Activated B cell treated with CpG ODN at 0.5 μM for 24 hours (primary cell): ENCODE measurements at regions of chr4 and their contacts with region 1.

Region 1: GRCh38 chr4:2468445-2469192 is at the start of gene RNF4:
- DNase-seq: peak; percentile 83
- ATAC-seq: peak; percentile 87
- H3K4me3 Mint-ChIP-seq: peak within 1 kb of the TSS; percentile 96
- H3K27ac Mint-ChIP-seq: peak within 1 kb of the TSS; percentile 94
- H3K4me1 Mint-ChIP-seq: peaks cover 51% of the 10 kb centered on the region
- H3K27me3 Mint-ChIP-seq: no peaks in the 10 kb centered on the region
- CTCF ChIP-seq: no peak
- total RNA-seq, gene RNF4: 93.5 and 93.6 TPM in 2 replicates

Region 2: GRCh38 chr4:2393353-2394270 is 75.0 kb before region 1 on chr4:
- CTCF ChIA-PET with region 1: no interaction called
- POLR2A ChIA-PET with region 1: no interaction called
- intact Hi-C with region 1: no loop called
- DNase-seq: no peak
- ATAC-seq: peak; percentile 72
- H3K4me3 Mint-ChIP-seq: peak overlapping the region; percentile 81
- H3K27ac Mint-ChIP-seq: peak overlapping the region; percentile 73
- H3K4me1 Mint-ChIP-seq: peaks cover 32% of the 10 kb centered on the region
- H3K27me3 Mint-ChIP-seq: peaks cover 11% of the 10 kb centered on the region
- CTCF ChIP-seq: no peak

Region 3: GRCh38 chr4:2412885-2413716 is 55.5 kb before region 1 on chr4:
- CTCF ChIA-PET with region 1: no interaction called
- POLR2A ChIA-PET with region 1: interaction called, 12 read pairs
- intact Hi-C with region 1: loop called (anchors 1 kb)
- DNase-seq: peak; percentile 55
- ATAC-seq: peak; percentile 70
- H3K4me3 Mint-ChIP-seq: peak overlapping the region; percentile 81
- H3K27ac Mint-ChIP-seq: peak overlapping the region; percentile 73
- H3K4me1 Mint-ChIP-seq: peaks cover 38% of the 10 kb centered on the region
- H3K27me3 Mint-ChIP-seq: peaks cover 13% of the 10 kb centered on the region
- CTCF ChIP-seq: no peak

Region 4: DNA sequence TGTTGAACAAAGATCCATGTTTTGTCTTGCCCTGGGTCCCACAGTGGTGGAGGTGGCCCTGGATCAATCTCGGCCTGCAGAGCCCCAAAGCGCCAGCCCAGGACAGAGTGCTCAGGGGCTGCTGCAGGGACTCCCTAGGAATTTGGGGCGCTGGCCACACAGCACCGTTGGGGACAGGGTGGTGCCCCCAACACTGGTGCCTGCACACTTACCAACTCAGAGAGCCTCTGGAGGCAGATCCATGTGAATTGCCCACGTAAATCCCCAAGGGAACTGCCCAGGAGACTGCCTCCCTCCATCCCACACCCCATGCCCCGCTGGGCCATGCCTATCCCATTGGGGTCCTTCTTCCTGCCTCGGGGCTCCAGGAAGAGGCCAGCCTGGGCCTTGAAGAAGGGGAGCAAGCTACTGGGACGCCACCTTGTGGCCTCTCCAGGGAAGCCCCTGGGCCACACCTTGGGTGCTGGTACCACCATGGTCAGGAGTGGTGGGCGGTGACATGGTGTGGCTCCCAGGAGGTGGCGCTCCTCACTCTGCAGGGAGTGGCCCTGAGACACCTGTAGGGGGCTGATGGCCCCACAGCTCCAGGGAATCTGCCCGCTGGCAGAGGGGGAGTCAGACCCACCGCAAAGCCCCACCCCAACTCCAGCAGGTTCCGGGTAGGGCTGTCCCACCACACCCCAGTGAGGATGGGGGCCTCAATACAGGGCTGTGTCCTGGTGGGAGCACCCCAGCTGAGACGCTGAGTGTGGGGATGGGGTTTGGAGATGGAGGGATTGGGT is 27.0 kb before region 1 on chr4:
- CTCF ChIA-PET with region 1: interaction called, 3 read pairs
- POLR2A ChIA-PET with region 1: no interaction called
- intact Hi-C with region 1: loop called (anchors 1 kb)
- DNase-seq: peak; percentile 61
- ATAC-seq: peak; percentile 100
- H3K4me3 Mint-ChIP-seq: no peak overlapping the region
- H3K27ac Mint-ChIP-seq: no peak overlapping the region
- H3K4me1 Mint-ChIP-seq: peaks cover 4% of the 10 kb centered on the region
- H3K27me3 Mint-ChIP-seq: no peaks in the 10 kb centered on the region
- CTCF ChIP-seq: no peak

Region 5: GRCh38 chr4:2484993-2485392 is 16.4 kb after region 1 on chr4:
- CTCF ChIA-PET with region 1: interaction called, 3 read pairs
- POLR2A ChIA-PET with region 1: interaction called, 103 read pairs
- intact Hi-C with region 1: loop called (anchors 1 kb)
- DNase-seq: peak; percentile 64
- ATAC-seq: peak; percentile 86
- H3K4me3 Mint-ChIP-seq: peak overlapping the region; percentile 75
- H3K27ac Mint-ChIP-seq: peak overlapping the region; percentile 92
- H3K4me1 Mint-ChIP-seq: peaks cover 93% of the 10 kb centered on the region
- H3K27me3 Mint-ChIP-seq: no peaks in the 10 kb centered on the region
- CTCF ChIP-seq: no peak

Region 6: DNA sequence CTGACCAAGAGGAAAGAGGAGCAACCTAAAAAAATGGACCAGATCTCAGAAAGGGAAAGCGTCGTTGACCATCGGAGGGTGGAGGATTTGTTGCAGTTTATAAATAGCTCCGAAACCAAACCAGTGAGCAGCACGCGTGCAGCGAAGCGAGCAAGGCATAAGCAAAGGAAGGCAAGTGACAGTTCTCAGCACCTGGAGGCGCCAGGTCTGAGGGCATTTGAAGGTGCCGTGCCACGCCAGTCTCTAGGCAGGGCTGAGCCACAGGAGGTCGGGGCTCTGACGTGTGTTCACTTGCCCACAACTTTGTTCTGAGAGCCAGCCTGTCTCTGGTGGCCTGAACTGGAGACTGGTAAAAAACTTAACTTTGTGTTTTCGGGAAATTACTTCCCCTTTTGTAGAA is 227.8 kb after region 1 on chr4:
- CTCF ChIA-PET with region 1: no interaction called
- POLR2A ChIA-PET with region 1: interaction called, 5 read pairs
- intact Hi-C with region 1: loop called (anchors 2 kb)
- DNase-seq: peak; percentile 72
- ATAC-seq: peak; percentile 90
- H3K4me3 Mint-ChIP-seq: peak overlapping the region; percentile 74
- H3K27ac Mint-ChIP-seq: peak overlapping the region; percentile 96
- H3K4me1 Mint-ChIP-seq: peaks cover 72% of the 10 kb centered on the region
- H3K27me3 Mint-ChIP-seq: no peaks in the 10 kb centered on the region
- CTCF ChIP-seq: no peak

Region 7: DNA sequence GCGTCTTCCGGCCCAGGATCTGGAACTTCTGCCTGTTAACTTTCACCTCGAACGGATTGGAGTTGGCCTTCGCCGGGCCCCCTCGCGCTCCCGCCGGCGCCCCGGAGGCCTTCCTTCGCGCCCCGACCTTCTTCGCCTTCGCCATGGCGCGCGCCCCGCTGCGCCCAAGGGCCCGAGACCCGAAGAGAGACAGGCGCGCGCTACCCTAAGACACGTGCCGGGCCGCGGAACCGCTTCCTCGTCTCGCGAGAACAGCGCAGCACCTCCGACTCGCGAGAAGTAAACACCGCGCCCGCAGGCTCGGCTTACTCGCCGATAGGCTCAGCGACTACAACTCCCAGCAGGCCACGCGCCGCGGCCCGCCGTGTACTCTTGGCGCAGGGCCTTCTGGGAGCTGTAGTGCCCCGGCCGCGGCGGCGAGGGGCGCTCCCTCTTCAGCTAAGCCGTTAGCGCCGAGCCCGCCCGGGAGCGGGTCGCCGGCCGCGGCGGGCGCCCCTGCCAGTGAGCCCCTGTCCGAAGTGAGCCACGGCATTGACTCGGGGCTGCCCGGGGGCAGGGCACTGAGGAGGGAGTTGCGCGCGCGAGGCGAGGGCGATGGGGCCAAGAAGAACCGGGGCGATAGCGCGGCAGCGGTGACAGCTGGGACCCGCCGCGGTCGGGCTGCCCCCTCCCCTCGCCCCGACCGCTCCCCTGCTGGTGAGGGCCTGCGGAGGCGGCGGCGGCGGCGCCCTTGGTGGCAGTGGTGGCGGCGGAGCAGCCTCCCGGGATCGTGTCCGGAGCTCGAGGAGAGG is 494.8 kb after region 1 on chr4 and contains the starts of genes GRK4 and NOP14:
- CTCF ChIA-PET with region 1: no interaction called
- POLR2A ChIA-PET with region 1: interaction called, 3 read pairs
- intact Hi-C with region 1: loop called (anchors 1 kb)
- DNase-seq: peak; percentile 89
- ATAC-seq: peak; percentile 91
- H3K4me3 Mint-ChIP-seq: peak within 1 kb of the TSS; percentile 91
- H3K27ac Mint-ChIP-seq: peak within 1 kb of the TSS; percentile 92
- H3K4me1 Mint-ChIP-seq: peaks cover 29% of the 10 kb centered on the region
- H3K27me3 Mint-ChIP-seq: no peaks in the 10 kb centered on the region
- CTCF ChIP-seq: no peak
- total RNA-seq, gene GRK4: 1.4 and 2.1 TPM in 2 replicates
- total RNA-seq, gene NOP14: 56.3 and 57.3 TPM in 2 replicates